Posterior vena cava (tissue), 2 donors: ENCODE measurements at regions of chr2 and their contacts with region 1.

Region 1: DNA sequence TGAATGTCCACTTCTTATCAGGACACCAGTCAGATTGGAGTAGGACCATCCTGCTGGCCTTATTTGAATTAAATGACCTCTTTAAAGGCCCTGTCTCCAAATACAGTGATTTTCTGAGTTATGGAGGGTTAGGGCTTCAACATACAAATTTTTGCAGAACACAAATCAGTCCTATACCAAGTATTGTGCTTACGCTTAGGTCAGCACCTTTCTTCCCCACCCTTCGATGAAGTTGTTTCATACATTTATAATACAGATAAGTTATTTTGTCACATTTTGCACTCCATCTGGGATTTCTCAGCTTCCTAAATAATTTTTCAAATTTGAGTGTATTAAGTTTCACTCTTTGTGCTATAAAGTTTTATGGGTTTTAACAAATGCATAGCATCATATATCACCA is 190.5 kb upstream of the EPAS1 start:
- DNase-seq: no peak

Region 2: GRCh38 chr2:46050489-46050888 is 56.2 kb before region 1 on chr2:
- intact Hi-C with region 1: no loop called
- DNase-seq: no peak

Region 3: DNA sequence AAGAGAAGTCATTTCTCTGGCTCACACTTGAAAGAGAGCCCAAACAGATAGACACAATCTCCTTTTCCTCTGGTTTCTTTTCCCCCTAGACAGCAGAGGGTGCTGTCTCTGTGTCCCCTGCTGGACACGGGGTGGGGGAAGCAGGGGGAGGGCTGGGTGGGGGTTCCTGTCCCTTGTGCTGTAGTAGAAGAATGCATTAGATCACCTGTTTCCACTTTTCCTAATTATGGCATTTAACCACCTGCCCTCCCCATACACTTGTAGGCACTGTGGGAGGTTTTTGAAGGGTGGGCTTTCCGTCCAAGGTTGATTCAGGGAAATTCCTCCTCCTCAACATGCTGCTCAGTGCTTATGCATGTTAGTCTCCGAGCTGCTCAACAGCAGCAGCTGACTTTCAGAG is 15.7 kb before region 1 on chr2:
- intact Hi-C with region 1: no loop called
- DNase-seq: no peak

Region 4: DNA sequence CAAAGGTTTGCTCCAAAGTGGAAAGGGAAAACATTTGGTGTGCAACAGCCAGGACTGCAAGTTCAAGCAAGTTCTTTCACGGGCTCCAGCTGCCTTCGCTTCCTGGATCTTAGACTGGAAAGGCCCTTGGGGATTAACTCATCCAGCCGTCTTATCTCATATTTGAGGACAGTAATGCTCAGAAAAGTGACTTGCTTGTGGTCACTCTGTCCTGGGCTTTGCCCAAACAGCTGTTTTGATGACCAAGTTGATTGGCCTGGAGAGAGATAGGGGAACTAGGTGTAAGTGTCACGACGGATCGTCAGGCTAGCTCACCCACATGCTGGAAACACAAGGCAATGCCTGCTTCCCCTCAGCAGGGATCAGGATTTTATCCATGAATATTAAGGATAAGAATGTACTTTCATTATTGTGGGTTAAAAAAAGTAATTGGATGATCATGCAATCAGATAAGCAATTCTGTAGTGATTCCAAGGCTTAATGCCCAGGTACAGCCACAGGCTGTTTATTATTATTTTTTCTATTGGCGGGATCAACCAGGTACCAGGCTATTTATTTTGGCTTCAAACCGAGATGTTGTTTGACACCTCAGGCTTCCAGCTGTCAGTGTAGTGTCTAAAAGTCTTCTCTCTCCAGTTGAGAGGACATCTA is 28.0 kb after region 1 on chr2:
- intact Hi-C with region 1: loop called in 1 of 2 experiments (anchors 1 kb)
- DNase-seq: no peak